Panc1 (cell line): ENCODE measurements at regions of chr3 and their contacts with region 1.

Region 1: DNA sequence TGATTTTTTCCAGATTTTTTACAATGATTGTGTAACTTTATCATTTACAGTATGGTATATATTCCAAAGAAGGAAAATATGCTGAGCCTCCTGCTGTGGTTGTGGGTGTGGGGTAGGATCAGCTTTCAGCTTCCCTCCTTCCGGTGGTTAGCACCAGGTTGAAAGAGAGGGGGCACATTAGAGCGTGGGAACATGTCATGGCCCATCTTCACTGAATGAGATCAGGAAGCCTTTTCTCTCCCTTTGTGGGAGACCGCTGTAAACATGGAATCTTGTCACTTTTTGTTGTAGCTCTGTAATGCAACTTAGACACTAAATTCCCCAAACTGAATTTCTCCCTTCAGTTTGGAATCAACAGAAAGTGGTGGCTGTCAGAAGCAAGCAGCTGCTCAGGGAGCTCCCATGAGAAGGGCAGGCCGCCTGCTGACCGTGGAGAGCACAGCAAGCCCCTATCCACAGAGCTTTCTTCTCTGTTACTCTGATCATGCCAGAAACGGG is 86.7 kb upstream of the LIMD1 start:
- DNase-seq: no peak
- ATAC-seq: peak; percentile 73; the same call in 1 of the 2 replicates
- H3K4me3 ChIP-seq: no peak overlapping the region
- H3K27ac ChIP-seq: no peak overlapping the region
- H3K4me1 ChIP-seq: no peaks in the 10 kb centered on the region
- H3K27me3 ChIP-seq: no peaks in the 10 kb centered on the region
- CTCF ChIP-seq: peak; percentile 45

Region 2: GRCh38 chr3:44932986-44933944 is 574.6 kb before region 1 on chr3:
- CTCF ChIA-PET with region 1: no interaction called
- POLR2A ChIA-PET with region 1: no interaction called
- in situ Hi-C with region 1: no loop called
- intact Hi-C with region 1: no loop called
- DNase-seq: no peak
- ATAC-seq: no peak
- H3K4me3 ChIP-seq: no peak overlapping the region
- H3K27ac ChIP-seq: no peak overlapping the region
- H3K4me1 ChIP-seq: no peaks in the 10 kb centered on the region
- H3K27me3 ChIP-seq: no peaks in the 10 kb centered on the region
- CTCF ChIP-seq: no peak

Region 3: GRCh38 chr3:45311953-45312801 is 195.7 kb before region 1 on chr3:
- CTCF ChIA-PET with region 1: interaction called, 12 read pairs
- POLR2A ChIA-PET with region 1: no interaction called
- in situ Hi-C with region 1: no loop called
- intact Hi-C with region 1: no loop called
- DNase-seq: no peak
- ATAC-seq: no peak
- H3K4me3 ChIP-seq: no peak overlapping the region
- H3K27ac ChIP-seq: no peak overlapping the region
- H3K4me1 ChIP-seq: no peaks in the 10 kb centered on the region
- H3K27me3 ChIP-seq: no peaks in the 10 kb centered on the region; the same call in 1 of the 2 replicates
- CTCF ChIP-seq: no peak